ENCODE measurements at regions of chr19 and their contacts with region 1.

Region 1: GRCh38 chr19:46668662-46669061 is 7.7 kb upstream of the DACT3 start:
- DNase-seq: no peak
- ATAC-seq: no peak
- H3K4me3 ChIP-seq: no peak overlapping the region
- H3K27ac ChIP-seq: no peak overlapping the region
- H3K4me1 ChIP-seq: no peaks in the 10 kb centered on the region
- H3K27me3 ChIP-seq: no peaks in the 10 kb centered on the region
- CTCF ChIP-seq: no peak
- POLR2A ChIP-seq: no peak

Region 2: GRCh38 chr19:46614114-46614722 is 54.4 kb before region 1 on chr19:
- intact Hi-C with region 1: loop called (anchors 5 kb)
- DNase-seq: peak; percentile 85 to 91 (median 88)
- ATAC-seq: peak; percentile 51
- H3K4me3 ChIP-seq: no peak overlapping the region
- H3K27ac ChIP-seq: no peak overlapping the region
- H3K4me1 ChIP-seq: peaks cover 40% of the 10 kb centered on the region
- H3K27me3 ChIP-seq: no peaks in the 10 kb centered on the region
- CTCF ChIP-seq: peak; percentile 83 to 89 (median 87)
- POLR2A ChIP-seq: no peak

Region 3: GRCh38 chr19:46718157-46718933 is 49.7 kb after region 1 on chr19:
- intact Hi-C with region 1: no loop called
- DNase-seq: peak in 3 of 4 donors; percentile 51 to 63 (median 61)
- ATAC-seq: no peak
- H3K4me3 ChIP-seq: no peak overlapping the region
- H3K27ac ChIP-seq: peak overlapping the region; percentile 81 to 86 (median 83)
- H3K4me1 ChIP-seq: peaks cover 35% of the 10 kb centered on the region
- H3K27me3 ChIP-seq: no peaks in the 10 kb centered on the region
- CTCF ChIP-seq: no peak
- POLR2A ChIP-seq: no peak

Measured in body of pancreas (tissue), 4 donors.